CD8-positive, alpha-beta T cell (primary cell): ENCODE measurements at regions of chr16 and their contacts with region 1.

Region 1: DNA sequence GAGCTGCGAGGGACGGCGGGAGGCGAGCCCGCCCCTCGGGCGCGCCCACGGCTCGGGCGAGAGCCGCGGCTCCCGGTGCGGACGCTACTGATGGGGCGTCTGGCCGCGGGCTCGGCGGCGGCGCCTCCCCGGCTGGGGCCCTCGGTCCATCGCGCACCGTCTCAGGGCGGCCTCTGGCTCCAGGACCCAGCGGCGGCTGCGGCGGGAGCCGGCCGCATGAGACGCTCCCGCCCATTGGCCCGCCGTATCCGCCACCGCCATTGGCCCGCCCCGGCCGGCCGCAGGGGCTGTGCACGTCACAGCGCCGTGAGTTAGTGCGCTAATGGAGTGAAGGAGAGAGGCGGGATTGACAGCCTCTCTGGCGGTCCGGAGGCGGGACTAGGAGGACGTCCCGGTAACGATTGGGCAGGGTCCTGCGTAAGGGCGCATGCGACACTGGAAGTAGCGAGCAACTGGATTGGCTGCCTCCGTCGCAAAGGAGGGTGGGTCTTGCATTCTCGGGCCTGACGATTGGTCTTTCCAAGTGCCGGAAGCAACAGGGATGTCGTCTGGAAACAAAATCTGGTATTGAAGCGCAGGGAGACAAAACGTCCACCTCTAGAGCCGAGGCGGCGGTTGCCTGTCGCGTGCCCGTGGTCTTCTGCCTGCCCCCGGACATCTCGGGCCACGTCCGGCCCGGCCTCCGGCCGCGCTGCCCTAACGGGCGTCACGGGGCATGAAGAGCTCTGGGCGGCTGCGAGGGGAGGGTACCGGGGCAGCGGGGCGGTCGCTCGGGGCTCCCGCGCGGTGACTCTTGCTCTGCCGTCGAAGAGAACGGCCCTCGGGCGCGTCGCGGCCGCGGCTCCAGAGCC is at the start of gene ANKRD11:
- DNase-seq: peak; percentile 96 to 100 (median 98)
- ATAC-seq: peak; percentile 86
- H3K4me3 ChIP-seq: peak within 1 kb of the TSS; percentile 66 to 91
- H3K4me3 Mint-ChIP-seq: peak within 1 kb of the TSS; percentile 95
- H3K27ac ChIP-seq: peak within 1 kb of the TSS; percentile 91 to 93
- H3K27ac Mint-ChIP-seq: peak within 1 kb of the TSS; percentile 96
- H3K4me1 ChIP-seq: peaks cover 46% of the 10 kb centered on the region
- H3K4me1 Mint-ChIP-seq: peaks cover 66% of the 10 kb centered on the region
- H3K27me3 ChIP-seq: no peaks in the 10 kb centered on the region
- H3K27me3 Mint-ChIP-seq: no peaks in the 10 kb centered on the region
- CTCF ChIP-seq: no peak
- total RNA-seq, gene ANKRD11: 257 to 260 TPM

Region 2: DNA sequence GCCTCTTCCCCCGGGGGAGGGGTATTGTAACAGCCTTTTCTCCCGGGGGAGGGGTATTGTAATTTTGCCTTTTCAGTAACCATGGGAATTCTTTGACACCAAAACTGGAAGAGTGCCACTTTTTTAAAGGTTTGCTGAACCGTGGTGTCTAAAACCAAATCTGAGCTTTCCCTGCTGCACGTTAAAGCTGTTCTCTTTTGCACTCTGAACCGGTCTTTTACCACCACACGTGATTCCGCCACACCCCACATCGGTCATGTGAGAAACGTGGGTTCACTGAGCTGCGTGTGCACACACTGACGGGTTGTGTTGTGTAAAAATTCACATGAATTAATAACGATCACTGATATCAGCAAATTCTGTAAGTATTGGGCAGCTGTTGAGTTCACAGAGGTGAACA is 406.2 kb before region 1 on chr16:
- CTCF ChIA-PET with region 1: no interaction called
- POLR2A ChIA-PET with region 1: no interaction called
- intact Hi-C with region 1: no loop called
- DNase-seq: no peak
- ATAC-seq: no peak
- H3K4me3 ChIP-seq: no peak overlapping the region
- H3K4me3 Mint-ChIP-seq: no peak overlapping the region
- H3K27ac ChIP-seq: no peak overlapping the region
- H3K27ac Mint-ChIP-seq: no peak overlapping the region
- H3K4me1 ChIP-seq: no peaks in the 10 kb centered on the region
- H3K4me1 Mint-ChIP-seq: peaks cover 2% of the 10 kb centered on the region
- H3K27me3 ChIP-seq: no peaks in the 10 kb centered on the region
- H3K27me3 Mint-ChIP-seq: peaks cover 9% of the 10 kb centered on the region
- CTCF ChIP-seq: no peak

Region 3: GRCh38 chr16:89241187-89242007 is 249.2 kb before region 1 on chr16:
- CTCF ChIA-PET with region 1: no interaction called
- POLR2A ChIA-PET with region 1: no interaction called
- intact Hi-C with region 1: loop called (anchors 1 to 5 kb)
- DNase-seq: peak; percentile 62 to 97 (median 87)
- ATAC-seq: peak; percentile 88
- H3K4me3 ChIP-seq: peak overlapping the region; percentile 76 to 85
- H3K4me3 Mint-ChIP-seq: peak overlapping the region; percentile 92
- H3K27ac ChIP-seq: peak overlapping the region; percentile 89 to 100
- H3K27ac Mint-ChIP-seq: peak overlapping the region; percentile 99
- H3K4me1 ChIP-seq: peaks cover 8% of the 10 kb centered on the region
- H3K4me1 Mint-ChIP-seq: peaks cover 25% of the 10 kb centered on the region
- H3K27me3 ChIP-seq: no peaks in the 10 kb centered on the region
- H3K27me3 Mint-ChIP-seq: no peaks in the 10 kb centered on the region
- CTCF ChIP-seq: no peak

Region 4: DNA sequence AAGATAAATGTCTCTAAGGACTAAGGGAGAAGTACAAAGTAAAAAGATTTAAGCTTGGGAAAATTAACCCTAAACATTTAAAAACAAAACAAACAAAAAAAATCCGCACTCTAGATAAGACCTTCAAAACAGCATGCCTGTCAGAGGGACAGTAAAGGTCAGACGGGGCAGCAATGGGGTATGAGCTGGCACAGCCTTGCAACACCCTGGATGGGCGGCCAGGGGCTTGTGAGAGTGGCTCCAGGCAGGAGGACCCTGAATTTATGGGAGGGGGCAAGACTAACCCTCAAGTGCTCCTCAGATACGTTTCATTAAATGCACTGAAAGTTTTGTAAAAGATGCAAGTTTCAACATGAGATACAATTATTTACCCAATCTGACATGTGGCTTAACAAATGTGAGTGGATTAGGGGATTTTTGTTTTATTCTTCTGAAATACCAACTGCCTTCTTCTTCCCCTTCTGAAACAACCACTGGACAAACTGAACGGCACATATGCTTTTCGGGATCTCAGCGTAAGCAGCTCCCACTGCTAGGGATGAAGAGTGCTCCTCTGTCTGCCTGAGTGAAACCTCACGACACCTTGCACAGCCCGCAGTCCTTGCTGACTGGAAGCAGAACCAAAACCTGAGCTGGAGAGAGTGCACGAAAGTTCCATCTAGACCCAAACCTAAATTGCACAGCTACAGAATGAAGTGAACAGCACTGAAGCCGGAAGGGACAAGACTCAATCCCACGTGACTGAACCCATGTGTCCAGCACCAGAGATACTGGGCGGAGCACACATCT is 128.7 kb before region 1 on chr16:
- CTCF ChIA-PET with region 1: interaction called, 3 read pairs
- POLR2A ChIA-PET with region 1: interaction called, 3 read pairs
- intact Hi-C with region 1: loop called in 1 of 2 experiments (anchors 1 kb)
- DNase-seq: no peak
- ATAC-seq: no peak
- H3K4me3 ChIP-seq: peak overlapping the region in 1 of 2 experiments; percentile 16
- H3K4me3 Mint-ChIP-seq: peak overlapping the region; percentile 8
- H3K27ac ChIP-seq: peak overlapping the region; percentile 11 to 56
- H3K27ac Mint-ChIP-seq: peak overlapping the region; percentile 92
- H3K4me1 ChIP-seq: peaks cover 80% of the 10 kb centered on the region
- H3K4me1 Mint-ChIP-seq: peaks cover 94% of the 10 kb centered on the region
- H3K27me3 ChIP-seq: no peaks in the 10 kb centered on the region
- H3K27me3 Mint-ChIP-seq: no peaks in the 10 kb centered on the region
- CTCF ChIP-seq: no peak

Region 5: GRCh38 chr16:89422905-89423630 is 67.5 kb before region 1 on chr16:
- CTCF ChIA-PET with region 1: no interaction called
- POLR2A ChIA-PET with region 1: no interaction called
- intact Hi-C with region 1: loop called in 1 of 2 experiments (anchors 5 kb)
- DNase-seq: peak in 7 of 9 experiments; percentile 41 to 82 (median 65)
- ATAC-seq: peak; percentile 71
- H3K4me3 ChIP-seq: no peak overlapping the region
- H3K4me3 Mint-ChIP-seq: peak overlapping the region; percentile 54
- H3K27ac ChIP-seq: peak overlapping the region in 1 of 2 experiments; percentile 42
- H3K27ac Mint-ChIP-seq: peak overlapping the region; percentile 74
- H3K4me1 ChIP-seq: peaks cover 86% of the 10 kb centered on the region
- H3K4me1 Mint-ChIP-seq: peaks cover 80% of the 10 kb centered on the region
- H3K27me3 ChIP-seq: no peaks in the 10 kb centered on the region
- H3K27me3 Mint-ChIP-seq: no peaks in the 10 kb centered on the region
- CTCF ChIP-seq: no peak

Region 6: GRCh38 chr16:89476804-89477261 is 13.8 kb before region 1 on chr16:
- CTCF ChIA-PET with region 1: interaction called, 5 read pairs
- POLR2A ChIA-PET with region 1: interaction called, 5 read pairs
- intact Hi-C with region 1: loop called in 1 of 2 experiments (anchors 2 kb)
- DNase-seq: peak in 1 of 9 experiments; percentile 37
- ATAC-seq: peak; percentile 51
- H3K4me3 ChIP-seq: no peak overlapping the region
- H3K4me3 Mint-ChIP-seq: peak overlapping the region; percentile 64
- H3K27ac ChIP-seq: no peak overlapping the region
- H3K27ac Mint-ChIP-seq: peak overlapping the region; percentile 66
- H3K4me1 ChIP-seq: peaks cover 91% of the 10 kb centered on the region
- H3K4me1 Mint-ChIP-seq: peaks cover 89% of the 10 kb centered on the region
- H3K27me3 ChIP-seq: no peaks in the 10 kb centered on the region
- H3K27me3 Mint-ChIP-seq: no peaks in the 10 kb centered on the region
- CTCF ChIP-seq: no peak

Region 7: DNA sequence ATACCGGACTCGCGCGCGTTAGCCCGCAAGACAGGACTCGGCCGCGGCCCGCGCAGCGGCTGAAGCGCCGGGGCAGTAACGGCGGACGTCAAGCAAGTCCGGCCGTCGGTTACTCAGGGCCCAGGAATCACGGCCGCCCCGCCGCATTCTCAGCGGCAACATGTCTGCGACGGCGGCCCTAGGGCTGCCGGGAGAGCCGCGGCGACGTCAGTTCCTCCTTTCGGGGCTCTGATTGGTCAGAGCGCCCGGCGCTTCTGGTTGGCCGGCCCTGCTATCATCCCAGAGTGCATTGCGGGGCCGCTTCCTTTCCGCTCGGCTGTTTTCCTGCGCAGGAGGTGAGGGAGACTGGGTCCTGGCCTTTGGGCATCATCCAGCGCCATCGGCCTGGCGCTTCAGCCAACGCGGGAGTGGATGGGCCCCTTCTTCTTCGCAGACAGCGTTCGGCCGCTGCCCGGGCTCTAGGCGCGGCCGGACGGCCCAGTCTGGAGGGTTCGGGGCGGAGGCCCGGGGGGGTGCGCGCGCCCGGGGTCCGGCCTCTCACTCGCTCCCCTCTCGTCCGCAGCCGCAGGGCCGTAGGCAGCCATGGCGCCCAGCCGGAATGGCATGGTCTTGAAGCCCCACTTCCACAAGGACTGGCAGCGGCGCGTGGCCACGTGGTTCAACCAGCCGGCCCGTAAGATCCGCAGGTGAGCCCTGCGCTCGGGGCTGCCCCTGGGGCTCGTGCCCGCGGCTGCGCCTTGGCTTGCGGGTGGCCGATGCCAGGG is 69.9 kb after region 1 on chr16 and contains the start of gene RPL13:
- CTCF ChIA-PET with region 1: no interaction called
- POLR2A ChIA-PET with region 1: no interaction called
- intact Hi-C with region 1: loop called in 1 of 2 experiments (anchors 1 kb)
- DNase-seq: peak; percentile 81 to 97 (median 93)
- ATAC-seq: peak; percentile 89
- H3K4me3 ChIP-seq: peak within 1 kb of the TSS; percentile 73 to 90
- H3K4me3 Mint-ChIP-seq: peak within 1 kb of the TSS; percentile 89
- H3K27ac ChIP-seq: peak within 1 kb of the TSS; percentile 90 to 97
- H3K27ac Mint-ChIP-seq: peak within 1 kb of the TSS; percentile 93
- H3K4me1 ChIP-seq: peaks cover 54% of the 10 kb centered on the region
- H3K4me1 Mint-ChIP-seq: peaks cover 51% of the 10 kb centered on the region
- H3K27me3 ChIP-seq: no peaks in the 10 kb centered on the region
- H3K27me3 Mint-ChIP-seq: no peaks in the 10 kb centered on the region
- CTCF ChIP-seq: no peak
- total RNA-seq, gene RPL13: 4,632 to 4,668 TPM

Region 8: DNA sequence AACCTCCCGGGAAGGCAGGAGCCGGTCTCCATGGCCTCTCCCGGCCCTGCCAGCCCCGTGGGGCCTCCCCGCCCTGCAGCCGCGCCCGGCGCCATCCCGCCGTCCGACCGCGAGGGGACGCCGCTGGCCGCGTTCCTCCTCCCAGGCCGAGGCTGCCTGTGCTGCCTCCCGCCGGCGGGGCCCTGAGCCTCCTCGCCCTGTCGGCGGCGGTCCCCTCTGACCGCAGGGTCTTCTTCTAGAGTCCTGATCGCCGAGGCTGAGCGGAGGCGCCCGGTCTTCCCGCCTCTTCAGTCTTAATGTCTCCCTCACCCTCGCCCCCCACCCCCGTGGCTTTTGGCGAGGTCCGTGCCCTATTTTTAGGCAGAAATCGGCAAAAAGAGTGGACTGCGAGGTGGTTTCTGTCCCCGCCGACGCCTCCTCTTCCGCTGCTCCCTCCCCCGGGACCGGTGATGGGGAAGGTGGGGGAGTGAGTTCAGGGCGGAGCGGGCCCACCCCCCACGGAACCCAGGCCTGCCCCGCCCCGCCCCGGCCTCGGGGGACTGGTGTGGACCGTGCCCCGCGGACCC is 84.2 kb after region 1 on chr16:
- CTCF ChIA-PET with region 1: no interaction called
- POLR2A ChIA-PET with region 1: no interaction called
- intact Hi-C with region 1: no loop called
- DNase-seq: peak in 7 of 9 experiments; percentile 40 to 71 (median 57)
- ATAC-seq: peak; percentile 53
- H3K4me3 ChIP-seq: peak overlapping the region; percentile 30 to 35
- H3K4me3 Mint-ChIP-seq: peak overlapping the region; percentile 53
- H3K27ac ChIP-seq: no peak overlapping the region
- H3K27ac Mint-ChIP-seq: no peak overlapping the region
- H3K4me1 ChIP-seq: peaks cover 25% of the 10 kb centered on the region
- H3K4me1 Mint-ChIP-seq: peaks cover 16% of the 10 kb centered on the region
- H3K27me3 ChIP-seq: peaks cover 10 to 14% of the 10 kb centered on the region in 2 experiments
- H3K27me3 Mint-ChIP-seq: peaks cover 19% of the 10 kb centered on the region
- CTCF ChIP-seq: no peak

Region 9: DNA sequence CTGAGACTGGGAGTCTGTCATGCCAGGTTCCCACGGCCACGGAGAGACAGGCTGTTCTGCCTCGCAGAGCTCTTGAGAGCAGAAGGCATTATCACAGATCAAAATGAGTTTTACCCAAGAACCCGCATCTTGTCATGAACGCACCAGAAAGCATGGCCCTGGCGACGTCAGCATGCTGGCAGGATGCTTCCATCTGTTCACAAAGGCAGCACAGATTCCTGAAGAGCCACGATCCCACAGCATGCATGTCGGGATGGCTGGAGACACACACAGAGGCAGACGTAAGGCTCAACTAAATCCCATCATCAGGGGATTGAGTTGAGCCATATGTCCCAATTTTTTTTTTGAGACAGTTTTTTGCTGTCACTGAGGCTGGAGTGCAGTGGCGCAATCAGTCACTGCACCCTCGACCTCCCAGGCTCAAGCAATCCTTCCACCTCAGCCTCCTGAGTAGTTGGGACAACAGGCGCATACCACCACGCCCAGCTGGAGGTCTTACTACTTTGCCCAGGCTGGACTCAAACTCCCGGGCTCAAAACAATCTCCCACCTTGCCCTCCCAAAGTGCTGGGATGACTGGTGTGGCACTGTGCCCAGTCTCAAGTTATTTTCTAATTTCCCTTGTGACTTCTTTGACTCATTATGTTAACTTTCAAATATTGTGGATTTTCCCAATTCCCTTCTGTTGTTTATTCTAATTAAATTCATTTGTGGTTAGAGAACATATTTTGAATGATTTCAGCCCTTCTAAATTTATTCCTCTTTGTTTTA is 314.7 kb after region 1 on chr16:
- CTCF ChIA-PET with region 1: no interaction called
- POLR2A ChIA-PET with region 1: no interaction called
- intact Hi-C with region 1: no loop called
- DNase-seq: no peak
- ATAC-seq: no peak
- H3K4me3 ChIP-seq: no peak overlapping the region
- H3K4me3 Mint-ChIP-seq: no peak overlapping the region
- H3K27ac ChIP-seq: no peak overlapping the region
- H3K27ac Mint-ChIP-seq: no peak overlapping the region
- H3K4me1 ChIP-seq: no peaks in the 10 kb centered on the region
- H3K4me1 Mint-ChIP-seq: no peaks in the 10 kb centered on the region
- H3K27me3 ChIP-seq: no peaks in the 10 kb centered on the region
- H3K27me3 Mint-ChIP-seq: no peaks in the 10 kb centered on the region
- CTCF ChIP-seq: no peak